GM12878 (cell line): ENCODE measurements at regions of chr13 and their contacts with region 1.

Region 1: DNA sequence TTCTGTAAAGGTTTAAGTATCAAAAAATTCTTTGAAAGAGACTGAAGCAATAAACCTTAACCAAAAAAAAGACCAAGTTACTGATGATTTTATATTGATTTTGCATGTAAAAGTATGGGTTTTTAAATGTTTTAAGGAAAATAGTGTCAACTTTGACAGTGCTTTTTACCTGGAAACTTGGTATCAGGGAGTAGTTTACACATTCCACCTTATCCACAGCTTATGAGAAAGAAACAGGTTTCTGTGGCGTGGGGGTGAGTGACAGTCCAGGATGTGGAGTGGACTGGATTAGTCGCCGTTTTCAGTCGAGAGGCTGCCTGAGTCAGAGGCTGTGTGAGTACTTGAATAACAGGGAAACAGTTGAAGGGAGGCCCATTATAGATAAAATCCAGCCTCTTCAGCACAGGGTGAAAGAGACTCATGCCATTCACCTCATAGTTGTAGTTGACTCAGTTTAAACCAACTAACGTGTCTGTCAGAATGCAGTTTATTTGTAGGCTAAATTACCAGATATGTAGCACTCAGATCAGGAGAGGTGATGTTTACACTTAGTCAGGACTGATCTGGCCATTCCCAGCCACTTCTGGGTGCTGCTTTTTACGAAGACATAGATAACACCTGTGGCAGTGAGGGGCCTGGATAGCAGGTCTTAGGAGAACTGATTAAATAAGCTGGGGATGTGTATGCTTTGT is 595 bp upstream of the GPR183 start:
- DNase-seq: no peak
- ATAC-seq: peak; percentile 50
- H3K4me3 ChIP-seq: peak overlapping the region; percentile 98
- H3K27ac ChIP-seq: peak overlapping the region; percentile 93
- H3K4me1 ChIP-seq: peaks cover 49% of the 10 kb centered on the region
- H3K27me3 ChIP-seq: no peaks in the 10 kb centered on the region
- CTCF ChIP-seq: no peak
- EP300 ChIP-seq: no peak
- POLR2A ChIP-seq: no peak; the same call in 1 of the 2 replicates
- RAD21 ChIP-seq: no peak

Region 2: GRCh38 chr13:99281811-99282263 is 26.0 kb before region 1 on chr13:
- CTCF ChIA-PET with region 1: interaction called, 4 read pairs
- POLR2A ChIA-PET with region 1: interaction called, 23 read pairs
- RAD21 ChIA-PET with region 1: interaction called, 247 read pairs
- SMC1A ChIA-PET with region 1: interaction called, 264 read pairs
- in situ Hi-C with region 1: no loop called
- intact Hi-C with region 1: no loop called
- DNase-seq: no peak
- ATAC-seq: peak; percentile 89
- H3K4me3 ChIP-seq: peak overlapping the region; percentile 8
- H3K27ac ChIP-seq: peak overlapping the region; percentile 79
- H3K4me1 ChIP-seq: peaks cover 53% of the 10 kb centered on the region
- H3K27me3 ChIP-seq: no peaks in the 10 kb centered on the region
- CTCF ChIP-seq: no peak
- EP300 ChIP-seq: no peak
- POLR2A ChIP-seq: no peak
- RAD21 ChIP-seq: no peak

Region 3: DNA sequence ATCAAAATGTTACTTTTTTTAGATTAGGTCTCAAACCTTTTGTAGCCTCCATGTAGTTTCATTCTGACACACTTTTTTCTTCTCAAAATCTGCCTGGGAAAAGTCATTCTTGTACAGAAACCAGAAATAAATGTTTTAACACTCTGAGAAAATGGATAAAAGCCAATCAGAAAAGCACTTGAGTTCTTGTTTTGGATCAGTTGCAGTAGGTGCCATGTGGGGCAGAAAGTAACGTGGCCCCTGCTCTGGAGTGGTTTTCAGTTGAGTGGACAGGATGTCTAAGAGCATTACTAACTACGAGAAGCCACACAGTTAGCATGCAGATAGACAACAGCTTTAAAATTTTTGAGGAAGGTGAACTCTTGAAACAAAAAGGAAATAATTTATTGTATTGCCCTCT is 19.7 kb before region 1 on chr13:
- CTCF ChIA-PET with region 1: interaction called, 8 read pairs
- POLR2A ChIA-PET with region 1: interaction called, 23 read pairs
- RAD21 ChIA-PET with region 1: interaction called, 79 read pairs
- SMC1A ChIA-PET with region 1: interaction called, 20 read pairs
- in situ Hi-C with region 1: no loop called
- intact Hi-C with region 1: no loop called
- DNase-seq: peak; percentile 93
- ATAC-seq: peak; percentile 91
- H3K4me3 ChIP-seq: no peak overlapping the region
- H3K27ac ChIP-seq: peak overlapping the region; percentile 76
- H3K4me1 ChIP-seq: peaks cover 46% of the 10 kb centered on the region
- H3K27me3 ChIP-seq: no peaks in the 10 kb centered on the region
- CTCF ChIP-seq: no peak
- EP300 ChIP-seq: 0 out of 4 replicates have a peak, but pooled peaks of 1 of the 2 experiments have one; percentile 36
- POLR2A ChIP-seq: no peak
- RAD21 ChIP-seq: peak; percentile 22; the same call in 1 of the 2 replicates

Region 4: GRCh38 chr13:99296398-99296797 is 11.4 kb before region 1 on chr13:
- CTCF ChIA-PET with region 1: interaction called, 8 read pairs
- POLR2A ChIA-PET with region 1: interaction called, 35 read pairs
- RAD21 ChIA-PET with region 1: interaction called, 31 read pairs
- SMC1A ChIA-PET with region 1: interaction called, 30 read pairs
- in situ Hi-C with region 1: no loop called
- intact Hi-C with region 1: no loop called
- DNase-seq: no peak
- ATAC-seq: peak; percentile 15
- H3K4me3 ChIP-seq: peak overlapping the region; percentile 58; the same call in 1 of the 2 replicates
- H3K27ac ChIP-seq: peak overlapping the region; percentile 62
- H3K4me1 ChIP-seq: peaks cover 14% of the 10 kb centered on the region
- H3K27me3 ChIP-seq: no peaks in the 10 kb centered on the region
- CTCF ChIP-seq: no peak
- EP300 ChIP-seq: no peak
- POLR2A ChIP-seq: no peak
- RAD21 ChIP-seq: peak; percentile 2; the same call in 1 of the 2 replicates

Region 5: DNA sequence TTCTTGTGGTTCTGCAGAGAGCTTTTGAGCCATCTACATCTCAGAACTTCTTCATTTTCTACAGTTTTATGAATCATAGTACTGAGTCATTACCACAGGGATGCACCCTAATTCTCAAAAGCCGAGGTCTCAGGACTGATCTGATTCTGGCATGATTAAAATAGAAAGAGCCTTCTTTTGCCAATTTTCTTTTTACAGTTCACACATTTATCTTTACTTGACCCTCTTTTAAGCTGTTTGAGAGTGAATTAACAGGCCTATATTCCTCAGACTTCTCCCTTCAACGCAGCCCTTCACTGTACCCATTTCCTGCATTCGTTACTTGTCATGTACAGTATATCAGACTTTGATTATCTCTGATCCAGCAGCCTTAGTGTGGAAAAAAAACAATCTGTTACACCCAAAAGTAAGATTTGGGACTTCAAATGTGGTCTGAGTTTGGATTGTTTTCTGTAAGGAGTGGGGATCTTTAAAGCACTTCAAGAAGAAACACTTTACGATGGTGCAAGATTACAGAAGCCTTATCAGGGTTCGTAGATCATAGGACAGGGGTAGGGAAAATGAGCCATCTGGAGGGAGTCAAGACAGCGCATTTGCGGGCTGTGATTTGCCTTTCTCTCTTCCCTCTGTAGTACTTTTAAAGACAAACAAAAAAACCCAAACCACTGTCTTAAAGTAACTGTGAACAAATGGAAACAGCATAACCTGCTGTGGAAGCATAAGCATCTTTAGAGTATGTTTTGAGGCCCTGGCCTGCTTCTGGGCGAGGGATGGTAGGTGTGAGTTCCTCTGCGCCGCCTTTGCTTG is 14.7 kb after region 1 on chr13:
- CTCF ChIA-PET with region 1: interaction called, 5 read pairs
- POLR2A ChIA-PET with region 1: interaction called, 29 read pairs
- RAD21 ChIA-PET with region 1: interaction called, 56 read pairs
- SMC1A ChIA-PET with region 1: interaction called, 84 read pairs
- in situ Hi-C with region 1: no loop called
- intact Hi-C with region 1: loop called (anchors 1 kb)
- DNase-seq: peak; percentile 85
- ATAC-seq: peak; percentile 92
- H3K4me3 ChIP-seq: peak overlapping the region; percentile 49
- H3K27ac ChIP-seq: peak overlapping the region; percentile 85
- H3K4me1 ChIP-seq: peaks cover 53% of the 10 kb centered on the region
- H3K27me3 ChIP-seq: no peaks in the 10 kb centered on the region
- CTCF ChIP-seq: no peak
- EP300 ChIP-seq: peak; percentile 55 to 84; a peak in 2 of 4 replicates
- POLR2A ChIP-seq: no peak
- RAD21 ChIP-seq: peak; percentile 21; the same call in 1 of the 2 replicates

Region 6: DNA sequence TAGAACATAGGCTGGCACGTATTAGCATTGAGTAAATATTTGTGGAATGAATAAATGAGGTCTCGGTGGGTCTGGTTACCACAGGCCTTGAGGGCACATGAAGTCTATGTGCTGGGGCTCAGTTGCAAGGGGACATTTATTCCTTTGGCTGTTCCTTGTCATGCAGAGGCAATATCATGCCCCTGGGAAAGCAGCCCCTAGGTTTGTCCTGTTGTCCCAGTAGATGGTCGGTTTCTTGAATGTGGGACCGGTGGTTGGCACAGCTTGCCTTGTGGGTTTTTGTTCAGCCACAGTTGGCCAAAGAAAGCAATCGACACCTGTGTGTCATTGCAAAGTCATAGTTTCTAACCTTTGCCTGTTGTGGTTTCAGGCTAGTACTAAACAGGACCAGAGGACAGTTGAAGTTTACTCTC is 24.1 kb after region 1 on chr13:
- CTCF ChIA-PET with region 1: interaction called, 11 read pairs
- POLR2A ChIA-PET with region 1: interaction called, 24 read pairs
- RAD21 ChIA-PET with region 1: interaction called, 126 read pairs
- SMC1A ChIA-PET with region 1: interaction called, 118 read pairs
- in situ Hi-C with region 1: no loop called
- intact Hi-C with region 1: no loop called
- DNase-seq: peak; percentile 79
- ATAC-seq: peak; percentile 89
- H3K4me3 ChIP-seq: no peak overlapping the region
- H3K27ac ChIP-seq: peak overlapping the region; percentile 66; the same call in 1 of the 2 replicates
- H3K4me1 ChIP-seq: peaks cover 21% of the 10 kb centered on the region
- H3K27me3 ChIP-seq: no peaks in the 10 kb centered on the region
- CTCF ChIP-seq: no peak
- EP300 ChIP-seq: peak; percentile 39 to 52; a peak in 2 of 4 replicates
- POLR2A ChIP-seq: no peak
- RAD21 ChIP-seq: no peak

Region 7: DNA sequence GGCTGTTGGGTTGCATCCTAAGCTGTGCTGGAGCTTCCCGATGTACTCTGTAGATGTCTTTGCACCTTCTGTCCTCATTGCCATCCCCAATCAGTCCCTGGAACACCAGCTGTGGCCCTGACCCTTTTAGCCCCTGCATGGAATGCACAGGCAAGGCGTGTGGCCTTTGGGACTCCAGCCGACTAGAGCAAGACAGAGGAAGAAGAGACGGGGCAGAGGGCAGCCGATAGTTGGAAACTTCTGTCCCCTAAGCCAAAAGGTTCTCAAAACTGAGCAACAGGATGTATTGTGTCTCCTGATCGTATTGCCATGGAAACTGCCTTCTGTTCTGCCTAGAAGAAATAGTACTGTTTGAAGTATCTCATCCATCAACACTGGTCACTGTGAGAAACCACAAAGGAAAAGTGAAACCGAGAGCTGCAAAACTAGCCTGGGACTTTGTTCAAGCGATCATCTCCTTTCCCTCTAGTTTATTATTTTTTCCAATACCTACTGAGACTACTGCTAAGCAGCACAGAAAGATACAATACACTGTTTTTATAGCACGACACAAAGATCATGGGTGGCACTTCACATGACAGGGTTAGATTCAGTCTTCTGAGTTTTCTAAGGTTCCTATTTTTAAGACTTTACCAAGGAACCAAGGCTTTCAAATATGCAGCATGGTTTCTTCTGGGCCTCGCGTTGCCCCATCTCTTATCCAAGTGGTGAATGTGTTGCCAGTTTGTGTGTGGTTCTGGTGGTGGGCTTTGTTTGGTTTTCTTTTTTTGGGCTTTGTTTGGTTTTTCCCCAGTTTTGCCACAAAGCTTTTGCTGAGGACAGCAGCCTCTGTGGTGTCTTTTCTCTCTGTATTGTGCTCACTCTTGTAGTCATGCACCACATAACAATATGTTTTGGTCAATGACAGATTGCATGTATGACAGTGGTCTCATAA is 48.6 kb after region 1 on chr13:
- CTCF ChIA-PET with region 1: interaction called, 4 read pairs
- POLR2A ChIA-PET with region 1: interaction called, 5 read pairs
- RAD21 ChIA-PET with region 1: interaction called, 99 read pairs
- SMC1A ChIA-PET with region 1: interaction called, 18 read pairs
- in situ Hi-C with region 1: no loop called
- intact Hi-C with region 1: loop called (anchors 2 kb)
- DNase-seq: peak; percentile 92
- ATAC-seq: peak; percentile 81
- H3K4me3 ChIP-seq: peak overlapping the region; percentile 41; the same call in 1 of the 2 replicates
- H3K27ac ChIP-seq: peak overlapping the region; percentile 81
- H3K4me1 ChIP-seq: peaks cover 65% of the 10 kb centered on the region
- H3K27me3 ChIP-seq: no peaks in the 10 kb centered on the region
- CTCF ChIP-seq: no peak
- EP300 ChIP-seq: peak; percentile 43 to 83; a peak in 3 of 4 replicates
- POLR2A ChIP-seq: no peak
- RAD21 ChIP-seq: no peak